CD8-positive, alpha-beta T cell (primary cell): ENCODE measurements at regions of chr1 and their contacts with region 1.

Region 1: GRCh38 chr1:109426278-109427170 is at the start of gene PSMA5:
- DNase-seq: peak; percentile 87 to 99 (median 93)
- ATAC-seq: peak; percentile 90
- H3K4me3 ChIP-seq: peak within 1 kb of the TSS; percentile 83 to 84
- H3K4me3 Mint-ChIP-seq: peak within 1 kb of the TSS; percentile 98
- H3K27ac ChIP-seq: peak within 1 kb of the TSS; percentile 80 to 90
- H3K27ac Mint-ChIP-seq: peak within 1 kb of the TSS; percentile 99
- H3K4me1 ChIP-seq: peaks cover 39% of the 10 kb centered on the region
- H3K4me1 Mint-ChIP-seq: peaks cover 39% of the 10 kb centered on the region
- H3K27me3 ChIP-seq: no peaks in the 10 kb centered on the region
- H3K27me3 Mint-ChIP-seq: no peaks in the 10 kb centered on the region
- CTCF ChIP-seq: no peak
- total RNA-seq, gene PSMA5: 30.9 to 32.6 TPM

Region 2: GRCh38 chr1:109099938-109100773 is 326.4 kb before region 1 on chr1:
- CTCF ChIA-PET with region 1: no interaction called
- POLR2A ChIA-PET with region 1: interaction called, 7 read pairs
- intact Hi-C with region 1: loop called in 1 of 2 experiments (anchors 10 kb)
- DNase-seq: peak; percentile 95 to 98 (median 97)
- ATAC-seq: peak; percentile 91
- H3K4me3 ChIP-seq: peak overlapping the region; percentile 88 to 93
- H3K4me3 Mint-ChIP-seq: peak overlapping the region; percentile 98
- H3K27ac ChIP-seq: peak overlapping the region; percentile 86 to 93
- H3K27ac Mint-ChIP-seq: peak overlapping the region; percentile 99
- H3K4me1 ChIP-seq: peaks cover 9% of the 10 kb centered on the region
- H3K4me1 Mint-ChIP-seq: peaks cover 18% of the 10 kb centered on the region
- H3K27me3 ChIP-seq: no peaks in the 10 kb centered on the region
- H3K27me3 Mint-ChIP-seq: no peaks in the 10 kb centered on the region
- CTCF ChIP-seq: peak; percentile 83

Region 3: DNA sequence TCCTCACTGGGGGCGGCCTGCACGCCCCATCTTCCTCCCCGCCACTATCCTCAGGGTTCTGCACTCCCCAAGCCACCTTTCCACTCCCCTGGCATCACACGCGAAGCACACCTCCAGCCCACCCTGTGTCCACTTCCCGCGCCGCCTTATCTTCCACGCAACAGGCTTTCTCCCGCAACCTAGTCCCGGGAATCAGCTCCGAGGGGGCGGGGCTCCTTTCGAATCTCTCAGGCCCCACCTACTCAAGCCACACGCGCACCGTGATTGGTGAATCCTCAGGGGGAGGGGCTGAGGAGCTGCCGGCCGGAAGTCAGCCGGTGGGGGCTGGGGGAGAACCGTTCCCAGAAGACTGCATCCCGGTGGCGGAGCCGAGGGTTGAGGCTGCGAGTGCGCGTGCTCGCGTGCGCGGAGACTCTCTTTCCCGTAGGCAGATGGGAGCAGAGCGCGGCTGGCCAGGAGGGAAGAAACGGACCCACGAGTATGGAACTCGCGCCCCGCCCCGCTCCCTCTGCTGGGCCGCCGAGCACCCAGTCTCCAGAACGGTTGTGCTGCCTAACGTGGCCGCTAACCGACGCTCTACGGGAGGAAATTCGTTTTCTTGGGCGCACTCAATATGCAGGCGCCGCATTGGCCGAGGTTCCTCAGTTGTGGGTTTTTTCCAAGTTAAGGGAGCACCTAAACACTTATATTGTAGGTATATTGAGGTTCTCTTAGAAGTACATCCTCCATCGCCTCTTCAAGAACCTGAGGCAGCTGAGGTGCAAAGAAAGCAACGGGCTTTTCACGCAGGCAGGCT is 143.4 kb before region 1 on chr1 and contains the start of gene PSRC1:
- CTCF ChIA-PET with region 1: no interaction called
- POLR2A ChIA-PET with region 1: interaction called, 5 read pairs
- intact Hi-C with region 1: loop called in 1 of 2 experiments (anchors 1 kb)
- DNase-seq: peak; percentile 73 to 94 (median 87)
- ATAC-seq: peak; percentile 94
- H3K4me3 ChIP-seq: peak within 1 kb of the TSS; percentile 72 to 82
- H3K4me3 Mint-ChIP-seq: peak within 1 kb of the TSS; percentile 93
- H3K27ac ChIP-seq: peak within 1 kb of the TSS; percentile 46 to 79
- H3K27ac Mint-ChIP-seq: peak within 1 kb of the TSS; percentile 88
- H3K4me1 ChIP-seq: peaks cover 12% of the 10 kb centered on the region
- H3K4me1 Mint-ChIP-seq: peaks cover 16% of the 10 kb centered on the region
- H3K27me3 ChIP-seq: no peaks in the 10 kb centered on the region
- H3K27me3 Mint-ChIP-seq: no peaks in the 10 kb centered on the region
- CTCF ChIP-seq: peak; percentile 40
- total RNA-seq, gene PSRC1: not detected

Region 4: DNA sequence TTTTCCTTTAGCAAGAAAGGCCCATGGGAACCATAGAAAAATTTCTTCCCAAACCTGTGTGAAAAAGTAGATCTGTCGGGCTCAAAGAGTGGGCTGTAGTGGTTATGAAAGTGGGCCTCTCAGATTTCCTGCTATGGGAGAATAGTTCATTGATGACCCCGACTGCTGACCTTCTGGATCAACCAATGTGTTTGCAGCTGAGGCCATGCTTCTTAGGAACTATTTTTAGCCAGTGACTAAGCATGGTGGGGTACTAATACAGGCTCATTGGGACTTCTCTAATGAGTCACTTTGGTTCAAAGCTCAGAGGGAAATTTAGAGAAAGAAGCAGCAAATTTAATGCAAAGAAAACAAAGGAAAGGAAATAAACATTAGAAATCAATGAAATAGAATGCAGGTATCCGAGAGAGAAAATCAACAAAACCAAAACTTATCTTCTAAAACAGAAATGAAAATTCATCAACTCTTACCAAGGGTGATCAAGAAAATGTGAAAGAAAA is 12.3 kb after region 1 on chr1:
- CTCF ChIA-PET with region 1: no interaction called
- POLR2A ChIA-PET with region 1: no interaction called
- intact Hi-C with region 1: no loop called
- DNase-seq: no peak
- ATAC-seq: no peak
- H3K4me3 ChIP-seq: no peak overlapping the region
- H3K4me3 Mint-ChIP-seq: no peak overlapping the region
- H3K27ac ChIP-seq: no peak overlapping the region
- H3K27ac Mint-ChIP-seq: no peak overlapping the region
- H3K4me1 ChIP-seq: no peaks in the 10 kb centered on the region
- H3K4me1 Mint-ChIP-seq: no peaks in the 10 kb centered on the region
- H3K27me3 ChIP-seq: peaks cover 0 to 2% of the 10 kb centered on the region in 2 experiments
- H3K27me3 Mint-ChIP-seq: peaks cover 14% of the 10 kb centered on the region
- CTCF ChIP-seq: no peak

Region 5: DNA sequence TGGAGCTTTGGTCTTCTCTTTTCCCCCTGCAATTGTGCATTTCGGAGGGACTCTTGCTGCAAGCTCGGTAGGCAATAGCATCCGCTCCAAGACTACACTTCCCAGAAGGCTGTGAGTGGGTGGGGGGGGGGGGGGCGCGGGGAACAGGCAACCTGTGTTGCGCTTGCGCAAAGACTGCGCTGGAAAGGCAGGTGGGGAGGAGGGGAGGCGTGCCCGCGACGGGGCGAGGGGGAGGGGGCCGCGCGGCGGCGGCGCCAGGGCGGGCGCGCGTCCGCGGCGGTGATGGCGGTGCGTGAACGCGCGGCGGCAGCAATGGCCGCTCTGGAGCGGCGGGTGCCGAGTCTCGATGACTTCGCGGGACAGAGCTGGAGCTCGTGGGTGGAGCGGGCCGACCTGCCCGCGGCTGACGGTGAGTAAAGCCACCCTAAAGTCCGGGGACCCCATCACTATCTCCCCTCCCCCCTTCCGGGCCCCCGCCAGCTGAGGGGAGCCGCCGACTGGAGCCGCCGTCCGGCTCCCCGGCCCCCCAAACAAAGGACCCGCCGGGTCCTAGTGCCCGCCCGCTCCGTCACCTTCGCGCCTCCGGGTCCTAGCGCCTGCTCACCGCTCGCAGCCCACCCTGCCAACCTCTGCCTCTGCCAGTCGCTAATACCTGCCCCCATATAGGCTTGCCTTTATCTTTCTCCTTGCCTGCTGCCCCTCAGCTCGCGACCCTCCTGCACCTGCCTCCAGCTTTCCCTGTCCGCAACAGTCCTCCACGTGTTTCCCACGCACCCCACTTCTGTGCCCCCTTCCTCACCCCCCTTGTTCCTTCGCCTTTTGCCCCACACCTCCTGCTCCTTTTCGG is 57.4 kb after region 1 on chr1 and contains the start of gene ATXN7L2:
- CTCF ChIA-PET with region 1: interaction called, 3 read pairs
- POLR2A ChIA-PET with region 1: interaction called, 30 read pairs
- intact Hi-C with region 1: loop called (anchors 1 kb)
- DNase-seq: peak; percentile 87 to 97 (median 92)
- ATAC-seq: peak; percentile 81
- H3K4me3 ChIP-seq: peak within 1 kb of the TSS; percentile 78 to 90
- H3K4me3 Mint-ChIP-seq: peak within 1 kb of the TSS; percentile 94
- H3K27ac ChIP-seq: peak within 1 kb of the TSS; percentile 78 to 93
- H3K27ac Mint-ChIP-seq: peak within 1 kb of the TSS; percentile 91
- H3K4me1 ChIP-seq: peaks cover 22% of the 10 kb centered on the region
- H3K4me1 Mint-ChIP-seq: peaks cover 35% of the 10 kb centered on the region
- H3K27me3 ChIP-seq: no peaks in the 10 kb centered on the region
- H3K27me3 Mint-ChIP-seq: peaks cover 2% of the 10 kb centered on the region
- CTCF ChIP-seq: no peak
- total RNA-seq, gene ATXN7L2: 16.8 to 19.4 TPM

Region 6: GRCh38 chr1:109620841-109621286 is 194.3 kb after region 1 on chr1:
- CTCF ChIA-PET with region 1: no interaction called
- POLR2A ChIA-PET with region 1: no interaction called
- intact Hi-C with region 1: loop called (anchors 2 to 5 kb)
- DNase-seq: peak; percentile 91 to 99 (median 97)
- ATAC-seq: peak; percentile 87
- H3K4me3 ChIP-seq: peak overlapping the region; percentile 90 to 92
- H3K4me3 Mint-ChIP-seq: peak overlapping the region; percentile 98
- H3K27ac ChIP-seq: peak overlapping the region; percentile 86 to 91
- H3K27ac Mint-ChIP-seq: peak overlapping the region; percentile 97
- H3K4me1 ChIP-seq: peaks cover 50% of the 10 kb centered on the region
- H3K4me1 Mint-ChIP-seq: peaks cover 64% of the 10 kb centered on the region
- H3K27me3 ChIP-seq: no peaks in the 10 kb centered on the region
- H3K27me3 Mint-ChIP-seq: no peaks in the 10 kb centered on the region
- CTCF ChIP-seq: no peak